Adrenal gland (tissue), 19 donors: ENCODE measurements at regions of chr17 and their contacts with region 1.

Region 1: DNA sequence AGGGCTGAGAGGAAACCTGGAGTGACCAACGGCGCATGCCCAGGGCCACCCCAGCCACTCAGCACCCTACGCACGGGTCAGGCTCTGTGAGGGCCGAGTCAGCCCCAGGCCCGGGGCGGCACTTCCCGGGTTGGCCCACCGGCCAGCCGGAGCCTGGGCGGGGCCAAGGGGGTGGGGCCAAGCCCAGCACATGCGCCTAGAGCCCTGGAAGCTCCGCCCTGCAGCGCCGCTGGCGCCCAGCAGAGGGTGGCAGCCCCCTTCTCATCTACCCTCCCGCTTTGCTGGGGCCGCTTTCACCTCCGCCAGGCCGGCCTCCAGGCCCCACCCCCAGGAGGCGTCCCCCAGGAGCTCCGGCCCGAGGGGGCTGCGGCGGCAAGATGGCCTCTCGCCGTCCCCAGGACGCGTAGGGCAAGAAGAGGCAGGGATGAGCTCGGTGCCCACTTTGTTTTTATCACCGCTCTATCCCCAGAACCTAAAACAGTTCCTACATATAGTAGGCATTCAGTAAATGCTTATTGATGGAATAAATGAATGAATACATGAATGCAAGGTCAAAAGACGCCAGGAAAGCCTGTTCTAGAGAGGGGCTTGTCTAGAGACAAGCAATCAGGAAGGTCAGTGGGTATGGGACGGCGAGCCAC is 31.3 kb downstream of the MYO18A start:
- DNase-seq: peak; percentile 93 to 97 (median 96)
- H3K4me3 ChIP-seq: peak overlapping the region in 2 of 4 donors; percentile 29 to 55
- H3K27ac ChIP-seq: peak overlapping the region in 4 of 5 donors; percentile 25 to 79 (median 70)
- H3K4me1 ChIP-seq: peaks cover 11 to 62% of the 10 kb centered on the region in 2 donors
- H3K27me3 ChIP-seq: no peaks in the 10 kb centered on the region
- CTCF ChIP-seq: peak; percentile 87 to 98 (median 94)
- POLR2A ChIP-seq: peak in 1 of 2 donors; percentile 54

Region 2: DNA sequence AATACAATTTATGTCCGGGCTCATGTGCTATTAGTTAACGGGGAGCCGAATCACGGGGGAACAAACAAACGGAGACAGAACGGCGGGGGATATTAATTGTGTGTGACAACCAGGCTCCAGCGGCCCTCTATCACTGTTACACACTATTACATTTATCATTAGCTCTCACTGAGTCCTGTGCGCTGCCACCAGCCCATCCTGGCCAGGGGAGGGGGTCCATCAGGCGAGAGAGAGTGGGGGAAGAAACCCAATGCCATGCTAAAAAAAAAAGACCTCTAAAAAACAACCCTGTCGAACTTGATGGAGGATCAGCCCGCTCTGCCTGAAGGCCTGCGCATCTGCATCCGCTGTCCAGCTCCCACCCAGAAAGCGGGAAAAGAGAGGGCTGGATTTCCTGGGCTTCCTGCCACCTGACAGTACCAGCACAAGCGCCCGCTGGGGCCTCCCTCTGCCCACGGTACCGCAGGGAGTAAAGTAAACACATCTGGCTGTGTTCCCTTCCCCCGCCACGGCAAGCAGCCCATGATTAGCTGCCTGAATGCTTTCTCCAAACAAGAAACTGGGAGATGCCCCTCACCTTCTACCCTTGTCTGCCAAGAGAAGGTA is 64.3 kb before region 1 on chr17:
- intact Hi-C with region 1: no loop called
- DNase-seq: peak in 1 of 7 donors; percentile 61
- H3K4me3 ChIP-seq: no peak overlapping the region
- H3K27ac ChIP-seq: no peak overlapping the region
- H3K4me1 ChIP-seq: no peaks in the 10 kb centered on the region
- H3K27me3 ChIP-seq: no peaks in the 10 kb centered on the region
- CTCF ChIP-seq: no peak
- POLR2A ChIP-seq: no peak

Region 3: DNA sequence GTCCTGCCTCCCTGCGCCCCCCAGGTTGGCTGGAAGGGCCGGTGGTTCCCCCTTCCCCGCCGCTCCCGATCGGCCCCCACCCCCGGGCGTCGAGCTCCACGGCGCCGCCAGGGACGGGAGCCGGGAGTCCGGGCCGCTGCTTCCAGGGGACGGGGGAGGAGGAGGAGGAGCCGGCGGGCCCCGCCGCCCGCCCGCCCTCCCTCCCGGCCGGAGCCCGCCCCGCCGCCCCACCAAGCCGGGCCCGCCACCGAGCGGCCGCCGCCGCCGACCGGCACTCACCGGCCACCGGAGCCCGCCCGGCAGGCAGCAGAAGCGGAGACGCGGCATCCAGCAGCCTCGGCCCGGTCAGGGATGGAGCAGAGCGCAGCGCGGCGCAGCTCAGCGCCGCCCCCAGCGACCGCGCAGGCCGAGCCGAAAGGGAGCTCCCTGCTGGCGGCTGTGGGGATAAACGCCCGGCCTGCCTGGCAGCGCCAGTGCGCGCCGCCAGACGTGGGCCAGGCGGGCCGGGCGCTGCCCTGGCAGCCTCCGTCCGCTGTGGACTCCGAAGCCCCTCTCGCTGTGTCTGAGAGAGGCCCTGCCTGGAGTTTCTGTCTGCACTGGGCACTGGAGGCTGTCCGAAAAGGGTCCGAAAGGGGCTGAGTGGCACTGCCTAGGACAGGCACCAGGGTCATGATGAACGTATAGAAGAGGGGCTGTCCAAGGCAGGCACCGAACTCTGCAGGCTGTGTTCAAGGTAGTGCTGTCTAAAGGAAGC is 31.3 kb after region 1 on chr17 and contains the start of gene MYO18A:
- intact Hi-C with region 1: loop called (anchors 5 kb)
- DNase-seq: peak; percentile 71 to 83 (median 82)
- H3K4me3 ChIP-seq: peak within 1 kb of the TSS in 2 of 4 donors; percentile 47 to 72
- H3K27ac ChIP-seq: peak within 1 kb of the TSS in 3 of 5 donors; percentile 57 to 92 (median 81)
- H3K4me1 ChIP-seq: peaks cover 10 to 41% of the 10 kb centered on the region in 2 donors
- H3K27me3 ChIP-seq: no peaks in the 10 kb centered on the region
- CTCF ChIP-seq: peak; percentile 29 to 97 (median 76)
- POLR2A ChIP-seq: peak; percentile 23 to 43
- total RNA-seq, gene MYO18A: 19.6 to 59.0 (median 39.1) TPM

Region 4: GRCh38 chr17:29219378-29220047 is 70.6 kb after region 1 on chr17:
- intact Hi-C with region 1: loop called in 1 of 2 experiments (anchors 5 kb)
- DNase-seq: peak; percentile 83 to 91 (median 88)
- H3K4me3 ChIP-seq: no peak overlapping the region
- H3K27ac ChIP-seq: no peak overlapping the region
- H3K4me1 ChIP-seq: peaks cover 0 to 8% of the 10 kb centered on the region in 2 donors
- H3K27me3 ChIP-seq: no peaks in the 10 kb centered on the region
- CTCF ChIP-seq: peak; percentile 91 to 99 (median 97)
- POLR2A ChIP-seq: no peak

Region 5: GRCh38 chr17:29283271-29283895 is 134.5 kb after region 1 on chr17:
- intact Hi-C with region 1: loop called in 1 of 2 experiments (anchors 10 kb)
- DNase-seq: no peak
- H3K4me3 ChIP-seq: no peak overlapping the region
- H3K27ac ChIP-seq: no peak overlapping the region
- H3K4me1 ChIP-seq: peaks cover 0 to 72% of the 10 kb centered on the region in 2 donors
- H3K27me3 ChIP-seq: no peaks in the 10 kb centered on the region
- CTCF ChIP-seq: no peak
- POLR2A ChIP-seq: no peak

Region 6: DNA sequence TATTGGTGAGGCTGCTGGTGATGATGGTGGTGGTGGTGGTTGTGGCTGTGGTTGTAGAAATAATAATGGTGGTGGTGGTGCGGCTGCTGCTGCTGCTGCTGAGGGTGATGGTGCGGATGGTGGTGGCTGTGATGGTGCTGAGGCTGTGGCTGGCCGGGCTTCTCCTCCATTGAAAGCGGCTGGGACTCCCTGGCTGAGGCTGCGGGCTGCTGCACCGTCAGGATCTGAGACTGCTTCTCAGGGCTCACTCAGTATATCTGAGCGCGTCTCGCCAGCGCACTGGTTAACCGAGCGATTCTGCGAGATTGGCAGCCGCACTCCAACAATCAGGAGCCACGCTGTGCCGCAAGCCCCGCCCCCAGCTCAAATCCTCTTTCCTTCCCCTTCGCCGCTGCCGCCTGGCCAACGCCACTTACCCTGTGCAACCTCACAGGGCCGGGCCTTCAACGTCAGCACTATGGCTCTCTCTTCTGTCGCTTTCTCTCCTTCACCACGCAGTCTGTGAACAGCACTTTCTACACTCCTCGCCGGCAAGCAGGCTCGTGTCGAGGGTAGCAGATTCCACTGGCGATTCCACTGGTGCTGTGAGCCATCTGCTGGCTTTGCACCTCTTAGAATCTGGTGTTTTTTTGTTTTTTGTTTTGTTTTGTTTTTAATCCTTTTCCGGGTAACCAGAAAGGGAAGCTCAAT is 145.1 kb after region 1 on chr17 and contains the start of gene NUFIP2:
- intact Hi-C with region 1: loop called (anchors 5 to 10 kb)
- DNase-seq: peak; percentile 99 to 100 (median 100)
- H3K4me3 ChIP-seq: peak within 1 kb of the TSS; percentile 60 to 94 (median 90)
- H3K27ac ChIP-seq: peak within 1 kb of the TSS; percentile 97 to 99 (median 99)
- H3K4me1 ChIP-seq: peaks cover 23 to 35% of the 10 kb centered on the region in 2 donors
- H3K27me3 ChIP-seq: no peaks in the 10 kb centered on the region
- CTCF ChIP-seq: peak in 2 of 6 experiments; percentile 4 to 24
- POLR2A ChIP-seq: peak; percentile 100
- total RNA-seq, gene NUFIP2: 22.2 to 84.5 (median 46.9) TPM